Dorsolateral prefrontal cortex (tissue), 120 donors: ENCODE measurements at regions of chr10 and their contacts with region 1.

Region 1: DNA sequence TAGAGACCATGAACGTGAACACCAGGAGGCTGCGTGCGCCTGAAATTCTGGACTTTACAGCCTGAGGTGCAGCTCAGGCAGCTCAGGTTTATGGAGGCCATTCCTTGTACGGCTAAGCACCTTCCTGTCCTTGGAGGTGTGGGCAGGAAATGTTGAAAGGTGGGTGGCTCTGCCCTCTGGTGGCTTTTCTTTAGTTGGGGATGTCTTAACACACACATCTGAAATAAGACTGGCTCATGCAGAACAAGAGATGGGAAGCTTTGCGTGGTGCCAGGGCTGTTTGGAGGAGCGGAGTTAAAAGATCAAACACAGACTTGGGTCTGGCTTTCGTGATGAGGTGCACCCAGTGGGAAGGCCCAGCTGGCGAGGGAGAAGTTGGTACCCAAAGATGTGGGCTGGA is 64.1 kb downstream of the DOCK1 start:
- DNase-seq: peak in 1 of 10 donors; percentile 45
- H3K4me3 ChIP-seq: no peak overlapping the region
- H3K27ac ChIP-seq: peak overlapping the region in 12 of 59 donors; percentile 2 to 63 (median 38)
- H3K27me3 ChIP-seq: no peaks in the 10 kb centered on the region
- CTCF ChIP-seq: peak in 52 of 56 donors; percentile 14 to 67 (median 42)

Region 2: DNA sequence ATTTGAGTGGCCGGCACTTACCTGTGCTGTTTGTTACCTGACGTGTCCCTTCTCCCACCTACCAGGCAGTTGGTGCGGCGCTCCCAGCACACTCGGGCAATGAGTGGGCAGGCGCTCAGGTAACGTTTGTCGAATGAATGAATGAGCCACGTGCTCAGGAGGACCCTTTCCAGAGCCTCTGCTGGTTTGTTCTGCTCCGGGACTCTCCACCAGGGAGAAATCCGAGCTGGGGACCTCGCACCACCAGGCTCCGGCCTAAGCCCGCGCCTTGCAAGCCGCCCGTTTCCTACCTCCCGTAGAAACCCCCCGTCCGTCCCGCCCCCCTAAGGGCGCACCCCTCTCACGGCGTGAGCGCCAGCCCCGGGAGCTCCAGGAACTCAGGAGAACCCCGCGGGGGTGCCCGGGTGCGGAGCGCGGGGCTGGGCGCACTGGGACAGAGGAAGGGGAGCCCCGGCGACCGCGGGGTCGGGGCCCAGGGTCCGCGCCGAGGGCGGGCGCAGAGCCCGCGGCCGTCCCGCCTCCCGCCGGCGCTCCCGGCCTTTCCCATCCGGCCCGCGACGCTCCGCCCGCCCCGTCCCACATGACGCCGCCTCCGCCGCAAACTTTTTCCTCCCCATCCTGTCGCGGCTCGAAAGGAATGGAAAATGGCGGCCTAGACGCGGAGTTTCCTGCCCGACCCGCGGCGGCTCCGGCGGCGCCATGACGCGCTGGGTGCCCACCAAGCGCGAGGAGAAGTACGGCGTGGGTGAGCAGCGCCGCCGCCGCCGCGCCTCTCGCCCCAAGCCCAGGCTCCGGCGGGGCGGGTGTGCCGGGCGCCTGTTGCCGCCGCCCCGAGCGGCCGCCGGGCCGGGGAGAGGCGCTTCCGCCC is 64.3 kb before region 1 on chr10 and contains the start of gene DOCK1:
- intact Hi-C with region 1: loop called in 1 of 2 experiments (anchors 2 kb)
- DNase-seq: peak in 4 of 10 donors; percentile 30 to 68 (median 52)
- H3K4me3 ChIP-seq: peak within 1 kb of the TSS; percentile 48 to 82 (median 71)
- H3K27ac ChIP-seq: peak within 1 kb of the TSS in 55 of 59 donors; percentile 29 to 90 (median 81)
- H3K27me3 ChIP-seq: peaks cover 0 to 36% (median 0%) of the 10 kb centered on the region in 45 donors
- CTCF ChIP-seq: peak in 3 of 56 donors; percentile 5 to 19 (median 12)
- total RNA-seq, gene DOCK1: 31.7 to 148 (median 56.3) TPM

Region 3: GRCh38 chr10:126917975-126918908 is 51.1 kb before region 1 on chr10:
- intact Hi-C with region 1: loop called in 1 of 2 experiments (anchors 5 kb)
- DNase-seq: peak in 3 of 10 donors; percentile 30 to 44 (median 40)
- H3K4me3 ChIP-seq: no peak overlapping the region
- H3K27ac ChIP-seq: peak overlapping the region in 58 of 59 donors; percentile 13 to 91 (median 81)
- H3K27me3 ChIP-seq: no peaks in the 10 kb centered on the region
- CTCF ChIP-seq: no peak